CD8-positive, alpha-beta T cell (primary cell): ENCODE measurements at regions of chr6 and their contacts with region 1.

Region 1: DNA sequence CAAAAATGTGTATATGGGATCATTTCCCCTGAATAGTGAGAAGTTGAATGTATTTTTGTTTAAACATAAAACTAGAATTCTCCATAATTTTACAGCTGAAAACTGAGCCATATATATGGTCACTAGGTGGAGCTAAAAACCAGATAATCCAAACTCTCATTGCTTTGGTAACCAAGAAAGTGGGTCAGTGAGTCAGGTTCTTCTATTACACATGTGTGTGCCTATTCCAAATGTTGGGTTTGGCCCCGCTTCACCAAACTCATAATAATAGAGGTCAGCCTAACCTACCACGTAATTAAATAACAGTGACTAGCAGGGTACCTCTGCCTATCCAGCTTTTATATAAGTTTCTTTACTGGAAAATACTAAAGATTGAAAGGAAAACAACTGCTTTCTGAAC is 19.3 kb upstream of the RNGTT start:
- DNase-seq: peak in 3 of 9 experiments; percentile 22 to 78 (median 70)
- ATAC-seq: peak; percentile 86
- H3K4me3 ChIP-seq: no peak overlapping the region
- H3K4me3 Mint-ChIP-seq: no peak overlapping the region
- H3K27ac ChIP-seq: no peak overlapping the region
- H3K27ac Mint-ChIP-seq: no peak overlapping the region
- H3K4me1 ChIP-seq: no peaks in the 10 kb centered on the region
- H3K4me1 Mint-ChIP-seq: no peaks in the 10 kb centered on the region
- H3K27me3 ChIP-seq: no peaks in the 10 kb centered on the region
- H3K27me3 Mint-ChIP-seq: peaks cover 2% of the 10 kb centered on the region
- CTCF ChIP-seq: peak; percentile 84

Region 2: GRCh38 chr6:88992741-88993552 is 10.2 kb after region 1 on chr6:
- CTCF ChIA-PET with region 1: interaction called, 17 read pairs
- POLR2A ChIA-PET with region 1: interaction called, 5 read pairs
- intact Hi-C with region 1: no loop called
- DNase-seq: no peak
- ATAC-seq: no peak
- H3K4me3 ChIP-seq: no peak overlapping the region
- H3K4me3 Mint-ChIP-seq: no peak overlapping the region
- H3K27ac ChIP-seq: no peak overlapping the region
- H3K27ac Mint-ChIP-seq: no peak overlapping the region
- H3K4me1 ChIP-seq: no peaks in the 10 kb centered on the region
- H3K4me1 Mint-ChIP-seq: no peaks in the 10 kb centered on the region
- H3K27me3 ChIP-seq: no peaks in the 10 kb centered on the region
- H3K27me3 Mint-ChIP-seq: no peaks in the 10 kb centered on the region
- CTCF ChIP-seq: no peak

Region 3: GRCh38 chr6:89009624-89010059 is 26.9 kb after region 1 on chr6:
- CTCF ChIA-PET with region 1: interaction called, 13 read pairs
- POLR2A ChIA-PET with region 1: no interaction called
- intact Hi-C with region 1: no loop called
- DNase-seq: peak in 1 of 9 experiments; percentile 16
- ATAC-seq: no peak
- H3K4me3 ChIP-seq: no peak overlapping the region
- H3K4me3 Mint-ChIP-seq: no peak overlapping the region
- H3K27ac ChIP-seq: no peak overlapping the region
- H3K27ac Mint-ChIP-seq: no peak overlapping the region
- H3K4me1 ChIP-seq: peaks cover 5% of the 10 kb centered on the region
- H3K4me1 Mint-ChIP-seq: peaks cover 9% of the 10 kb centered on the region
- H3K27me3 ChIP-seq: no peaks in the 10 kb centered on the region
- H3K27me3 Mint-ChIP-seq: no peaks in the 10 kb centered on the region
- CTCF ChIP-seq: no peak

Region 4: DNA sequence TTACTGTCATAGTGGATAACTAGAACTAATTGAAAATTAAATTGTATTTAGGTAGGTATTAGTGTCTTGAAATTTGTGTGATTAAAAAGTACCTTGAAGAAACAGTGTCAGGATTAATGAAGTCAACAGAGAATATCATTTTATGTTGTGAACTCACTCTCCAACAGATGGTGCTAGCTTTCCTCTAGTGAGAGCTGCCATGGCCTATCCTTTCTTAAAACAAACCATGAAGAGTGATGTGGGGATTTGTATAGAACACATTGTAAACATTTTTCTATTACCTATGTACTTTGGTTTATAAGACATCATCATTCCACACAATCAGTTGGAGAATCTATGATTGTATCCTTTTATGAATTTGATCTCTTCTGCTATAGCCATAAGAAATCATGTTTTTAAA is 139.9 kb after region 1 on chr6:
- CTCF ChIA-PET with region 1: interaction called, 13 read pairs
- POLR2A ChIA-PET with region 1: interaction called, 3 read pairs
- intact Hi-C with region 1: no loop called
- DNase-seq: peak in 2 of 9 experiments; percentile 34 to 49
- ATAC-seq: peak; percentile 57
- H3K4me3 ChIP-seq: no peak overlapping the region
- H3K4me3 Mint-ChIP-seq: no peak overlapping the region
- H3K27ac ChIP-seq: no peak overlapping the region
- H3K27ac Mint-ChIP-seq: no peak overlapping the region
- H3K4me1 ChIP-seq: no peaks in the 10 kb centered on the region
- H3K4me1 Mint-ChIP-seq: peaks cover 2% of the 10 kb centered on the region
- H3K27me3 ChIP-seq: no peaks in the 10 kb centered on the region
- H3K27me3 Mint-ChIP-seq: no peaks in the 10 kb centered on the region
- CTCF ChIP-seq: peak; percentile 47

Region 5: DNA sequence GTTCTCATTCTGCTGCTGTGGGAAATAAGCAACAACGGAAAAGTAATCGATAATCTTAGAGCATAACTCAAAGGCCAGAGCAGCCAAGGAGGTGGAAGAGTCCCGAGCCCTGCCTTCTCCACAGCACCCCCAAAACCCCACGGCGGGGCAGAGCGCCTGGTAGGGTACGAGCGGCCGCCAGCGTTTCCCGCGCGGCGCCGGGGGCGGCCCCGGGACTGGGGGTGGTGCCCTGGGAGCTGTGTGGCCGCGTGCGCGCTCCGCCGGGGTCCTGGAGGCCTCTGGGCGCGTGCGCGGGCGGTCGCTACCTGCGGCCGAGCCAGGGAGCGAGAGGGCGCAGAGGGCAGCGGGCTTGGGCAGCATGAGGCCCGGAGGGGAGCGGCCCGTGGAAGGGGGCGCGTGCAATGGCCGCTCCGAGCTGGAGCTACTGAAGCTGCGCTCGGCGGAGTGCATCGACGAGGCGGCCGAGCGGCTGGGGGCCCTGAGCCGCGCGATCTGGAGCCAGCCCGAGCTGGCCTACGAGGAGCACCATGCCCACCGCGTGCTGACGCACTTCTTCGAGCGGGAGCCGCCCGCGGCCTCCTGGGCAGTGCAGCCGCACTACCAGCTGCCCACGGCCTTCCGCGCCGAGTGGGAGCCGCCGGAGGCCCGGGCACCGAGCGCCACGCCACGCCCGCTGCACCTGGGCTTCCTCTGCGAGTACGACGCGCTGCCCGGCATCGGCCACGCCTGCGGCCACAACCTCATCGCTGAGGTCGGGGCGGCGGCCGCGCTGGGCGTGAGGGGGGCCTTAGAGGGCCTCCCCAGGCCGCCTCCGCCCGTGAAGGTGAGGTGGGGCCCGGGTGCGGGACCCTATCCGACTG is 163.3 kb after region 1 on chr6 and contains the start of gene PM20D2:
- CTCF ChIA-PET with region 1: interaction called, 7 read pairs
- POLR2A ChIA-PET with region 1: no interaction called
- intact Hi-C with region 1: loop called in 1 of 2 experiments (anchors 2 kb)
- DNase-seq: peak; percentile 35 to 80 (median 64)
- ATAC-seq: peak; percentile 77
- H3K4me3 ChIP-seq: peak within 1 kb of the TSS; percentile 66 to 87
- H3K4me3 Mint-ChIP-seq: peak within 1 kb of the TSS; percentile 96
- H3K27ac ChIP-seq: peak within 1 kb of the TSS; percentile 73 to 85
- H3K27ac Mint-ChIP-seq: peak within 1 kb of the TSS; percentile 97
- H3K4me1 ChIP-seq: peaks cover 19% of the 10 kb centered on the region
- H3K4me1 Mint-ChIP-seq: peaks cover 34% of the 10 kb centered on the region
- H3K27me3 ChIP-seq: no peaks in the 10 kb centered on the region
- H3K27me3 Mint-ChIP-seq: no peaks in the 10 kb centered on the region
- CTCF ChIP-seq: no peak
- total RNA-seq, gene PM20D2: 5.5 to 6.2 TPM

Region 6: DNA sequence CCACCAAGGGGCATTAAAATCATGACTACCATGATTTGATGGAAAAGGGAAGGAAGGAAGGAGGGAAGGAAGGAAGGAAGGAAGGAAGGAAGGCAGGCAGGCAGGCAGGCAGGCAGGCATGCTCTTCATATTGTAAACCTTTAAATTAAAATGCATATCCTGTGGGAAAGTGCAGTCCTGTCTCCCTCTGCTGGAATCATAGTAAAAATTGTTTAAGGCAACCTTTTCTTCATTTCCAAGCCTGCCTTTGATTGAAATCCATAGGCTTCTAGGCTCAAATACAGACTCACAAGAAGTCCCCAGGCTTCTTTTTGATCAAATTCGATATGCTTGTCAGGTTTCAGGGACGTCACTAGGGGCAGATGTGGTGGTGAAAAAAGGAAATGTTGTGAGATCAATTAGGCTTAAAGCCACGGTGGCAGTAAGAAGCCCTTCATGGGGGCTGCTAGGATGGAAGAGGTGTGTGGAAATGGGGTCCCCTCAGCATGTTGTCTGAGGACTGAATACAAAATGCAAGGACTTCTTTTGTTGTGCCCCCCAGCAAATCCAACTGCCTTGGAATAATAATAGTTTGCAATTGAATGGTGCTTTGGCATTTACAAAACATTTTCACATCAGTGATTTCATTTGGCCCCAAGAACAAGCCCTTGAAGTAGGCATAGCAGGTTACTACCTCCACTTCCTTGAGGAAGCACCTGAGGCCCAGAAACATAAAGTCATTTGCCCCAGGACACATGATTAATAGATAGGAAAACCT is 260.0 kb after region 1 on chr6:
- CTCF ChIA-PET with region 1: interaction called, 78 read pairs
- POLR2A ChIA-PET with region 1: no interaction called
- intact Hi-C with region 1: loop called (anchors 1 kb)
- DNase-seq: peak in 2 of 9 experiments; percentile 40 to 53
- ATAC-seq: no peak
- H3K4me3 ChIP-seq: no peak overlapping the region
- H3K4me3 Mint-ChIP-seq: no peak overlapping the region
- H3K27ac ChIP-seq: no peak overlapping the region
- H3K27ac Mint-ChIP-seq: no peak overlapping the region
- H3K4me1 ChIP-seq: peaks cover 15% of the 10 kb centered on the region
- H3K4me1 Mint-ChIP-seq: peaks cover 20% of the 10 kb centered on the region
- H3K27me3 ChIP-seq: no peaks in the 10 kb centered on the region
- H3K27me3 Mint-ChIP-seq: peaks cover 3% of the 10 kb centered on the region
- CTCF ChIP-seq: peak; percentile 35